Naive thymus-derived CD4-positive, alpha-beta T cell (primary cell): ENCODE measurements at regions of chr4 and their contacts with region 1.

Region 1: DNA sequence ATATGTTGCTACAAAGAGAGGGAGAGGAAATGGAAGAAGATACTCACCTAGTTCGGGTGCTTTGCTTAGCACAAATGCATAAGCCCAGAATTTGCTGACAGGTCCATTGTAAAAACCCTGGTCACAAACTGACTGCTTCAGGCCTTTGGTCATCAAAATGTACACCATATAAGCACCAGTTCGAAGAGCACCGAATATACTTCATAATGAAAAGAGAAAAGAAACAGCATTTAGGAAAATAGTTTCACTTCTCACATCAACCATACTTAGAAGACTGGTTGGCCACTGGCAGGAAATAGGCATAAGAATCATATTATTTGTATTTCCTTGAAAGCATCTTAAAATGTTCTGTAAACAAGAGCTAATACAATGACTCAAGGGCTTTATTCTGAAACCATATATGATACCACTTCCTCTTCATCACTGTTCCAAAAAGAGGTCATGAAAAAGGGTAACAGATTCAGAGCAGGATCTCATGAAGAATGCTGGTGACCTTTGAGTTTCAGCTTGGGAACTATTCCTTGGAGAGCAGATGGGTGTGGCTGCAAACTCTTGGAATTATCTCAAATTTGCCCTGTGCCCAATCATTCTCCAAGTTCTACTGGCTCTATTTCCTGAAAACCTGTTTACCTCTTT is 138.7 kb downstream of the ELOVL6 start:
- DNase-seq: no peak
- ATAC-seq: peak; percentile 70
- H3K4me3 ChIP-seq: no peak overlapping the region
- H3K4me3 Mint-ChIP-seq: peak overlapping the region in 2 of 10 donors; percentile 50 to 83
- H3K27ac ChIP-seq: no peak overlapping the region
- H3K27ac Mint-ChIP-seq: peak overlapping the region in 3 of 9 donors; percentile 19 to 92 (median 53)
- H3K4me1 ChIP-seq: peaks cover 0 to 23% of the 10 kb centered on the region in 2 donors
- H3K4me1 Mint-ChIP-seq: peaks cover 6 to 70% (median 12%) of the 10 kb centered on the region in 7 donors
- H3K27me3 ChIP-seq: no peaks in the 10 kb centered on the region
- H3K27me3 Mint-ChIP-seq: no peaks in the 10 kb centered on the region

Region 2: GRCh38 chr4:109658871-109659410 is 400.7 kb before region 1 on chr4:
- CTCF ChIA-PET with region 1: no interaction called
- POLR2A ChIA-PET with region 1: no interaction called
- intact Hi-C with region 1: no loop called
- DNase-seq: peak in 5 of 9 donors; percentile 26 to 47 (median 31)
- ATAC-seq: peak; percentile 54
- H3K4me3 ChIP-seq: no peak overlapping the region
- H3K4me3 Mint-ChIP-seq: peak overlapping the region in 5 of 10 donors; percentile 14 to 66 (median 44)
- H3K27ac ChIP-seq: peak overlapping the region; percentile 38
- H3K27ac Mint-ChIP-seq: peak overlapping the region in 7 of 9 donors; percentile 59 to 83 (median 76)
- H3K4me1 ChIP-seq: peaks cover 0 to 32% of the 10 kb centered on the region in 2 donors
- H3K4me1 Mint-ChIP-seq: peaks cover 15 to 78% (median 58%) of the 10 kb centered on the region in 7 donors
- H3K27me3 ChIP-seq: no peaks in the 10 kb centered on the region
- H3K27me3 Mint-ChIP-seq: no peaks in the 10 kb centered on the region

Region 3: DNA sequence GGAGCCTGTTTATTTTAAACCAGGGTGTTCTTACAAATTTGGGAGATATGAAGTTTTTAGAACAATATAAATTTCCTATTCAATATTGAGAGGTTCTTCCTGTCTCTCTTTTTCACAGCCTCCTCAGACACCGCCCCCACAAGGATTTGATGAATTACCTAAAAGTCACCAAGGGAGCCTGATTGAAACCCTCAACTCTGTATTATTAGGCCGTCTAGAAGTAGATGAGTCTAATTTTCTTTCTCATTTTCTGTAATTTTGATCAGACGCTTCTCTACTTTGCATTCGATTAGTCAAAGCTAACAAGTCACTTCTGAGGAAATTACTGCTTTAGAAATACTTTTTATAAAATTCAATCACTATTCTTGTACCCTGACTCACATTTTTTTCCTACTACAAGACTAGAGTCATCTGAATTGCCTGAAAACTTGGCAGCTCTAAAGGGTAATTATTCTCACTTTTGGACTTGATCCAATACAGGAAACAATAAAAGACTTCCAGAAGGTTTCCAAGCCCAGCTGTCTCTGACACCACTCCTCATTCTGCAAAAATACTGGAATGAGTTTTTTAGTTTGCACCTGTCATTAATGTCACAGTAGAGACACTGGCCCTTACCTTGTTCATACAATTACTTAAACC is 27.5 kb after region 1 on chr4:
- CTCF ChIA-PET with region 1: no interaction called
- POLR2A ChIA-PET with region 1: no interaction called
- intact Hi-C with region 1: loop called in 1 of 2 experiments (anchors 1 kb)
- DNase-seq: no peak
- ATAC-seq: no peak
- H3K4me3 ChIP-seq: no peak overlapping the region
- H3K4me3 Mint-ChIP-seq: no peak overlapping the region
- H3K27ac ChIP-seq: no peak overlapping the region
- H3K27ac Mint-ChIP-seq: peak overlapping the region in 1 of 9 donors; percentile 48
- H3K4me1 ChIP-seq: peaks cover 0 to 11% of the 10 kb centered on the region in 2 donors
- H3K4me1 Mint-ChIP-seq: peaks cover 13 to 62% (median 29%) of the 10 kb centered on the region in 7 donors
- H3K27me3 ChIP-seq: no peaks in the 10 kb centered on the region
- H3K27me3 Mint-ChIP-seq: no peaks in the 10 kb centered on the region